Activated CD4-positive, alpha-beta T cell treated with anti-CD3 and anti-CD28 coated beads, Interleukin-2, amount 10 ng/mL, durations not matched to agents 24 days and 14 days (primary cell): ENCODE measurements at regions of chr4 and their contacts with region 1.

Region 1: DNA sequence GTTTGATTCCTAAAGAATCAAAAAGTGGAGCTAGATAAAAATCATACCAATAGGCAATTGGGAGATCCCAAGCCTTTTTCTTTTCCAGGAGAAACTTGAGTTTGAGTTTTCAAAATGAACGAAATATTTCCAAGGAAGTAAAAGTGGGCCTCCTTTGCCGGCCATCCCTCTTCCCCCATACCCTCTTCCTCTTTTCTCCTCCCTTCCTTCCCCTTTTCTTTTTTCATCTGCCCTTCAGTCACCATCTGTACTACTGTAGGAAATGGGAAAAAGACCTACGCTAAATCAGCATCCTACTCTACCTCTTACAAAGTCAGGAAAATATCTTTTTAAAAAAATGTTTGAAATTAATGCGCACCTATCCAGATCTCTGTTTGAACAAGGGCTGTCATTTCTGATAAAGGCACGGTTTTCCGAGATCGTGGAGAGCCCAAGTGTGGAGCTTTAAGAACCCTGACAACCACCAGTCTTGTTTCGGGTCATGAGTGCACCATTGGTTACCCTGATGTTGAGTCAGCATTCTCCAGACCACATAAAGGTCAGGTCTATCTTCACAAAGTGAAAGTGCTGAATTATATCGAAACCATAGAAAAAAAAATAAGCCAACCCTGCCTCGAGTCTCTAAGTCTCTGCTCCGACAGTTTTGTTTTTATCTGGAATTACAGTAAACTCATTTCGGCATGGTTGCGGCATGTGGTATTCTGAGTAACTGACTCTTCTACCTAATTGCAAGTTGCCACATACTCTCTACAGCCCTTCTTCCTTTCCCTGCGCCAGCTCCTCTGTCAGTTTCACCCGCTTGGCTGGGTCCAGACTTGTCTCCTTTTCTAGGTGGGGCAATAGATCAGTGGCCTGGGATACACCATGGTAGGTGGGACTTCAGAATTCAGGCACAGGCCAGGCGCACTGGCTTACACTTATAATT is 140.2 kb upstream of the KLF3 start:
- DNase-seq: peak; percentile 81
- H3K4me3 Mint-ChIP-seq: no peak overlapping the region
- H3K27ac Mint-ChIP-seq: peak overlapping the region; percentile 18
- H3K4me1 Mint-ChIP-seq: peaks cover 13% of the 10 kb centered on the region
- H3K27me3 Mint-ChIP-seq: peaks cover 27% of the 10 kb centered on the region

Region 2: GRCh38 chr4:38560768-38561558 is 37.2 kb after region 1 on chr4:
- intact Hi-C with region 1: loop called (anchors 1 kb)
- DNase-seq: peak; percentile 61
- H3K4me3 Mint-ChIP-seq: no peak overlapping the region
- H3K27ac Mint-ChIP-seq: no peak overlapping the region
- H3K4me1 Mint-ChIP-seq: peaks cover 11% of the 10 kb centered on the region
- H3K27me3 Mint-ChIP-seq: peaks cover 50% of the 10 kb centered on the region

Region 3: GRCh38 chr4:38663801-38664705 is 140.3 kb after region 1 on chr4 and contains the start of gene KLF3:
- intact Hi-C with region 1: loop called (anchors 5 kb)
- DNase-seq: peak; percentile 96
- H3K4me3 Mint-ChIP-seq: peak within 1 kb of the TSS; percentile 76
- H3K27ac Mint-ChIP-seq: peak within 1 kb of the TSS; percentile 65
- H3K4me1 Mint-ChIP-seq: peaks cover 40% of the 10 kb centered on the region
- H3K27me3 Mint-ChIP-seq: peaks cover 47% of the 10 kb centered on the region
- total RNA-seq, gene KLF3: 0.83 and 1.0 TPM in 2 replicates